Thyroid gland (tissue), 4 donors: ENCODE measurements at regions of chr13 and their contacts with region 1.

Region 1: GRCh38 chr13:35630551-35631275 is 154.2 kb upstream of the MAB21L1 start:
- DNase-seq: no peak
- H3K4me3 ChIP-seq: no peak overlapping the region
- H3K27ac ChIP-seq: no peak overlapping the region
- H3K4me1 ChIP-seq: no peaks in the 10 kb centered on the region
- H3K27me3 ChIP-seq: no peaks in the 10 kb centered on the region
- CTCF ChIP-seq: peak; percentile 9 to 56 (median 40)
- POLR2A ChIP-seq: no peak

Region 2: DNA sequence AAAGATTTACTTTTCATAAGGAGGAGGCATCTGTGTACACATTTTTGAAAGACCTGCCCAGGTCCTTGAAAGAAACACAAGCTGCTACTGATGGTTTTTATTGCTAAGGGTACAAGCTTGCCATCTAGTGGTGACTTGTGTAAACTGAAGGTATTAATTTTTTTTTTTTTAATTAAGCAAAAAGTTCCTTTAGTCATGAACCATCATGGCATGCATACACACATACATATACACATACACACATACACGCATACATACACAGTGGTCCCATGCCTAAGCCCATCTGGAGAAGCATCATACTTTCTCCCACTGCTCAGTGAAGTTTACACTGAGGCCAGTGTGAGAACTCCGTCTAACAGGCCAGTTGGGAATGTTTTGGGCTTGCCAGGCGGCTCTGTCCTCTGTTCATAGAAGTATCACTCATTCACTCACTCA is 187.9 kb after region 1 on chr13:
- intact Hi-C with region 1: loop called (anchors 10 kb)
- DNase-seq: no peak
- H3K4me3 ChIP-seq: no peak overlapping the region
- H3K27ac ChIP-seq: no peak overlapping the region
- H3K4me1 ChIP-seq: no peaks in the 10 kb centered on the region
- H3K27me3 ChIP-seq: no peaks in the 10 kb centered on the region
- CTCF ChIP-seq: peak; percentile 16 to 73 (median 52)
- POLR2A ChIP-seq: no peak